ENCODE measurements at regions of chr2 and their contacts with region 1.

Region 1: DNA sequence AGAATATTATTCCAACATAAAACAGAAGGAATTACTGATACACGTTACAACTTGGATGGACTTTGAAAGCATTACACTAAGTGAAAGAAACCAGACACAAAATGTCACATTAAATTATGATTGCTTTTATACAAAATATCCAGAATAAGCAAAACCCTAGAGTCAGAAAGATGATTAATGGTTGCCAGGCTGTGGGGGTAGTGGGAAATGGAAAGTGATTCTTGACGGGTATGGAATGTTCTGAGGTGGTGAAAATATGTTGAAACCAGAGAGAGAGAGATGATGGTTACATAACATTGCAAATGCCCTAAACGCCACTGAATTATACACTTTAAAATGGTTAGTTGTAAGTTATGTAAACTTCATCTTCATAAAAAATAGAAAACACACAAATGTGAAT is 1057.2 kb upstream of the TMEFF2 start:
- DNase-seq: no peak
- H3K4me3 ChIP-seq: no peak overlapping the region
- H3K27ac ChIP-seq: no peak overlapping the region
- H3K4me1 ChIP-seq: no peaks in the 10 kb centered on the region
- H3K27me3 ChIP-seq: no peaks in the 10 kb centered on the region
- CTCF ChIP-seq: no peak
- POLR2A ChIP-seq: no peak

Region 2: GRCh38 chr2:193228276-193228675 is 23.6 kb before region 1 on chr2:
- intact Hi-C with region 1: loop called (anchors 2 kb)
- DNase-seq: no peak
- H3K4me3 ChIP-seq: no peak overlapping the region
- H3K27ac ChIP-seq: no peak overlapping the region
- H3K4me1 ChIP-seq: no peaks in the 10 kb centered on the region
- H3K27me3 ChIP-seq: no peaks in the 10 kb centered on the region
- CTCF ChIP-seq: no peak
- POLR2A ChIP-seq: no peak